MCF 10A (cell line): ENCODE measurements at regions of chr13 and their contacts with region 1.

Region 1: DNA sequence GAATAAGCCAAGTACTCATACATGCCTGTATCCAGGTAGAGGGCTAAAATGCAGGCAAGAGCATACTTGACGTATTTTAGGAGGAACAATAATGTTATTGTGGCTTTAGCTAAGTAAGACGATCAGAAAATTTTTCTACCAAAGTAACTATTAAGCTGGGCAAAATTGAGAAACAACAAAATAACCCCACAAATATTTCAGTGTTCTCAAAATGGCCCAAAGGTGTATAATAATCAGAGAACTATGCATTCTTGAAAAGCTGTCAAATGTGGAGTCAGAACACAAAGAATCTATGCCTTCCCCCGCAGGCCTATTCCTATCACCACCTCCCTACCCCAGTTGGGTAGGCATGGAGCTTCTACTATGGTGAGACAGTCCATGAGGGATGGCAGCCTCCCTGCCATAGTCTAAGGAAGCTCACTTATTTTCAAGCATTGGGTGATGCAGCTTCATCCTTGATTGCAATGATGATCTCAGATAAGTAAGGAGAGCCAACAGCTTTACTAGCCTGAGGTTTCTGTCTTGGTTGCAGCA is 1132.5 kb upstream of the SPRY2 start:
- DNase-seq: no peak
- H3K4me3 Mint-ChIP-seq: no peak overlapping the region
- H3K27ac Mint-ChIP-seq: peak overlapping the region; percentile 35
- H3K4me1 Mint-ChIP-seq: peaks cover 5% of the 10 kb centered on the region
- H3K27me3 Mint-ChIP-seq: no peaks in the 10 kb centered on the region
- CTCF ChIP-seq: no peak

Region 2: GRCh38 chr13:81058916-81059290 is 414.5 kb before region 1 on chr13:
- CTCF ChIA-PET with region 1: no interaction called
- POLR2A ChIA-PET with region 1: no interaction called
- intact Hi-C with region 1: loop called (anchors 10 kb)
- DNase-seq: peak; percentile 32
- H3K4me3 Mint-ChIP-seq: no peak overlapping the region
- H3K27ac Mint-ChIP-seq: peak overlapping the region; percentile 23
- H3K4me1 Mint-ChIP-seq: peaks cover 5% of the 10 kb centered on the region
- H3K27me3 Mint-ChIP-seq: no peaks in the 10 kb centered on the region
- CTCF ChIP-seq: no peak

Region 3: GRCh38 chr13:81406639-81407292 is 66.7 kb before region 1 on chr13:
- CTCF ChIA-PET with region 1: no interaction called
- POLR2A ChIA-PET with region 1: no interaction called
- intact Hi-C with region 1: no loop called
- DNase-seq: no peak
- H3K4me3 Mint-ChIP-seq: no peak overlapping the region
- H3K27ac Mint-ChIP-seq: no peak overlapping the region
- H3K4me1 Mint-ChIP-seq: peaks cover 7% of the 10 kb centered on the region
- H3K27me3 Mint-ChIP-seq: no peaks in the 10 kb centered on the region
- CTCF ChIP-seq: no peak